Activated CD4-positive, alpha-beta memory T cell treated with anti-CD3 and anti-CD28 coated beads for 36 hours (primary cell): ENCODE measurements at regions of chr6 and their contacts with region 1.

Region 1: DNA sequence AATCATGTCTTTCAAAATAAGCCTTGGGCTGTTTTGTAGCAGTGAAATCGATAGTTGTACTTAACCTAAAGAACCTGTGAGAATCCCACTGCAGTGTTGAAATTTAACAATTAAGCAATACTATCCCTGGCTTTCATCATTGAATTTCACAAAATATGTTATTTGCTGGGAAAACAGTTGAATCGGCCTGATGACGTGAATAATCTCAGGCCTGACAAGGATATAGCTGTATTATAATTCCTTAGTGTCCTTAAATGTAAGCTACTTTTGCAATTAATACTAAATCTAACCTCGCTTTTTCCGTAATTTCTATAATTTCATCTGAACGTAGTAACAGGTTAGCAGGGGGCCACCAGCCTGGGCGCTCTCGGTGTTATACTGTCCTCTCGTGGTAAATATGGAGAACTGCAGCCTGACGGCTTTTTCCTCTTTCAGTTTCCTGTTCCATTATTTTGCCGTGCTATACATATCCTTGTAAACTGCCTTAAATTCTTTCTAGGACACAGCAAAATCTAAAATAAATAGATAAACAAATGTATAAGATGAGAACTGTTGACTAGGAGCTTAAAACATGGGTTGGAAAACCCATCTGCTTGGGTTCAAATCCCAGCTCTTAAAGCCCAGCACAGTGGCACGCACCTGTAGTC is 24.0 kb downstream of the MTFR2 start:
- DNase-seq: peak; percentile 59
- H3K4me3 Mint-ChIP-seq: no peak overlapping the region
- H3K27ac Mint-ChIP-seq: no peak overlapping the region
- H3K4me1 Mint-ChIP-seq: peaks cover 4% of the 10 kb centered on the region
- H3K27me3 Mint-ChIP-seq: no peaks in the 10 kb centered on the region

Region 2: GRCh38 chr6:135506270-135506997 is 719.7 kb before region 1 on chr6:
- CTCF ChIA-PET with region 1: interaction called, 28 read pairs
- POLR2A ChIA-PET with region 1: no interaction called
- intact Hi-C with region 1: loop called (anchors 1 kb)
- DNase-seq: no peak
- H3K4me3 Mint-ChIP-seq: no peak overlapping the region
- H3K27ac Mint-ChIP-seq: no peak overlapping the region
- H3K4me1 Mint-ChIP-seq: peaks cover 6% of the 10 kb centered on the region
- H3K27me3 Mint-ChIP-seq: peaks cover under 1% of the 10 kb centered on the region

Region 3: GRCh38 chr6:135909737-135910387 is 316.3 kb before region 1 on chr6:
- CTCF ChIA-PET with region 1: interaction called, 13 read pairs
- POLR2A ChIA-PET with region 1: no interaction called
- intact Hi-C with region 1: loop called (anchors 5 kb)
- DNase-seq: peak; percentile 60
- H3K4me3 Mint-ChIP-seq: no peak overlapping the region
- H3K27ac Mint-ChIP-seq: no peak overlapping the region
- H3K4me1 Mint-ChIP-seq: peaks cover 2% of the 10 kb centered on the region
- H3K27me3 Mint-ChIP-seq: no peaks in the 10 kb centered on the region

Region 4: DNA sequence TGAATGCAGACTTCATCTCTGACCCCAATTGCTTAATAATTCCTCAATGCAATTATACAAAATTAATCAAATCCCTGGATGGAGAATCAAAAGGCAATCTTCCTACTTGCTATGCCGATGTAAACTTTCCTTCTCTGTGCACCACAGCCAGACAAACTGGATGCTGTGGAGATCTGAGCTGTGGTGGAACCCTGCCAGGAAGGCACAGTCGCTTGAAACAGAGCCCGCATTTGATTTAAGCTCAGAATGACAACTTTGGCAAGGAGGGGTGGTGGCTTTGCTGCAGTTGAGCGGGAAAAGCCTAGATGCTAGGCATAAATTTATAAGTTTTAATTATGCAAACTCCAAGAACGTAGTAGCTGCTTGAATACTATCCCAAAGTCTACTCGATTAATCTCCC is 166.8 kb before region 1 on chr6:
- CTCF ChIA-PET with region 1: no interaction called
- POLR2A ChIA-PET with region 1: no interaction called
- intact Hi-C with region 1: no loop called
- DNase-seq: no peak
- H3K4me3 Mint-ChIP-seq: no peak overlapping the region
- H3K27ac Mint-ChIP-seq: no peak overlapping the region
- H3K4me1 Mint-ChIP-seq: no peaks in the 10 kb centered on the region
- H3K27me3 Mint-ChIP-seq: no peaks in the 10 kb centered on the region

Region 5: DNA sequence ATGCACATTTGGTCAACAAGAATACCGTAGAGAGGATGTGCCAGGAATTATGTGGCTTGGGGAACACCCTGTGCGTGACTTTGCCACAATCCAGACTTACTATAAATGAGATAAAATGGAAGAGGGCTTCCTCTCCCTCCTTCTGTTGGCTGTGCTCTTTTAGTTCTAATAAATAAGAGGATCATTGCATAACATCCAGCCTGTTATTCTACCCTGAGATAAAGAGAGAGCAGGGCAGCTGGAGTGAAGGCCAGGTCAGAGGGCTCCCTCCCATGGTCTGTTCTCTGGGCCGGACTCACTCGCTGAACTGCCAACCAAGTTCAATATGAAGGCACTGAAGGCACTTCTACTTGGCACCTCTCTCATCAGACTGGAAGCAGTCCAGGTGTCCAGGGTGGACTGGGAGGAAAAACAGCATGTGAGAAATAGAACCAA is 67.7 kb before region 1 on chr6:
- CTCF ChIA-PET with region 1: no interaction called
- POLR2A ChIA-PET with region 1: no interaction called
- intact Hi-C with region 1: no loop called
- DNase-seq: no peak
- H3K4me3 Mint-ChIP-seq: no peak overlapping the region
- H3K27ac Mint-ChIP-seq: no peak overlapping the region
- H3K4me1 Mint-ChIP-seq: no peaks in the 10 kb centered on the region
- H3K27me3 Mint-ChIP-seq: no peaks in the 10 kb centered on the region

Region 6: GRCh38 chr6:136236466-136237293 is 10.5 kb after region 1 on chr6:
- CTCF ChIA-PET with region 1: interaction called, 10 read pairs
- POLR2A ChIA-PET with region 1: interaction called, 7 read pairs
- intact Hi-C with region 1: no loop called
- DNase-seq: no peak
- H3K4me3 Mint-ChIP-seq: no peak overlapping the region
- H3K27ac Mint-ChIP-seq: no peak overlapping the region
- H3K4me1 Mint-ChIP-seq: peaks cover 12% of the 10 kb centered on the region
- H3K27me3 Mint-ChIP-seq: no peaks in the 10 kb centered on the region